SK-N-SH (cell line): ENCODE measurements at regions of chr2 and their contacts with region 1.

Region 1: GRCh38 chr2:9142551-9143263 is 63.9 kb upstream of the ASAP2 start:
- DNase-seq: peak; percentile 94
- H3K4me3 ChIP-seq: peak overlapping the region; percentile 23 to 36; a peak in 2 of 4 replicates
- H3K27ac ChIP-seq: peak overlapping the region; percentile 16 to 58; a peak in 3 of 4 replicates
- H3K4me1 ChIP-seq: peaks cover 3 to 8% of the 10 kb centered on the region in 2 experiments; a peak in 2 of 4 replicates
- H3K27me3 ChIP-seq: no peaks in the 10 kb centered on the region
- CTCF ChIP-seq: peak; percentile 99
- EP300 ChIP-seq: peak in 1 of 2 experiments; percentile 44; a peak in 1 of 4 replicates
- RAD21 ChIP-seq: peak; percentile 99

Region 2: DNA sequence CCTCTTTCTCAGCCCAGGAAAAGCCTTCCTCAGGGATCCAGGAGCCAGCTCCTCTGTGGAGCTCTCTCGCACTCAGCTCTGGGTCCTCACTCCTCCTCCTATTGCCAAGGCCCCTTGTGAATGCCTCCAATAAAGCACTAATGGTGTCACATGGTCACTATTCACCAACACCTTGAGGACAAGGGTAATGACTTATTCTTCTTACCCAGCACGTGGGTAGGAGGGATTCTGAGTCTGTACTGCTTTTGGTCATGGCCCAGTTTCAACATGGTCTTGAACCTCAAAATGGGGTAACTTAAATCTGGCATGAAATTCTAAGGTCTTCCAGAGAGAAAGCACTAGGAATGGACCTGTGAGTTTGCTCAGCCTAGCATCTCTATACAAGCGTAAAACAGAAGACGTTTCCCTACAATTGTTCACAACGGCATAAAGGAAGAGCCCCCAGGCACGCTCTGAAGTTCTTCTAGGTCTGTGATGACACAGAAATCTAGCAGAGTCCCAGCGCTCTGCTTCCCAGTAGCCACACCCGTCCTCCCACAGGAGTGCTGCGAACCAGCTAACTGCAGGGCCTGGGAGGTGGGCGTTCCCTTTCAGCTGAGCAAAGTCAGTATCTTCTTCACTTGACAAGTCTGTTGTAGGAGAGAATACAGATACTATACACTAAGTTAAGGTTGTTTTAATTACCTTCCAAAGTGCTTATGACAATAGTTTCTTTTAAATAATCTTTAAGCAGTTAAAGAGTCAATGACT is 290.7 kb before region 1 on chr2:
- CTCF ChIA-PET with region 1: interaction called, 13 read pairs
- POLR2A ChIA-PET with region 1: no interaction called
- DNase-seq: no peak
- H3K4me3 ChIP-seq: no peak overlapping the region
- H3K27ac ChIP-seq: no peak overlapping the region
- H3K4me1 ChIP-seq: no peaks in the 10 kb centered on the region; a peak in 1 of 4 replicates
- H3K27me3 ChIP-seq: no peaks in the 10 kb centered on the region
- CTCF ChIP-seq: no peak
- EP300 ChIP-seq: no peak
- RAD21 ChIP-seq: no peak

Region 3: DNA sequence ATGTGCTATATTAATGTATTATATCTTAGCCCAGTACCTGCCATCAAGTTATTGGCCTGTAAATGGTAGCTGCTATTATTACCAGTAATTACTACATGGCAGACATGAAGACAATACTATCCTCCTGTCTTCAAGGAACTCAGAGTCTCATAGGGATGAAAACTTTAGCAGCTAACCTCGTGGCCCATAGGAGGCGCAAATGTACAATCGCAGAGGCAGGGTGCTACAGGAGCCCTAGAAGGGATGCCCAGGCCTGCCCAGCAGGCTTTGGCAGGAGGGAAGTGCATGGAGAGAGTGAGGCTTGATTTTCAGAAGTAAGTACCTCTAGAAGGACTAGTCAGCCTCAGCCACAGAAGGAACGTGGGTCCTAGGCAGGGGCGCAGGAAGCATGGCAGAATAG is 260.6 kb before region 1 on chr2:
- CTCF ChIA-PET with region 1: interaction called, 25 read pairs
- POLR2A ChIA-PET with region 1: no interaction called
- DNase-seq: peak; percentile 51
- H3K4me3 ChIP-seq: no peak overlapping the region
- H3K27ac ChIP-seq: no peak overlapping the region
- H3K4me1 ChIP-seq: no peaks in the 10 kb centered on the region
- H3K27me3 ChIP-seq: no peaks in the 10 kb centered on the region
- CTCF ChIP-seq: peak; percentile 52
- EP300 ChIP-seq: no peak
- RAD21 ChIP-seq: peak; percentile 66

Region 4: DNA sequence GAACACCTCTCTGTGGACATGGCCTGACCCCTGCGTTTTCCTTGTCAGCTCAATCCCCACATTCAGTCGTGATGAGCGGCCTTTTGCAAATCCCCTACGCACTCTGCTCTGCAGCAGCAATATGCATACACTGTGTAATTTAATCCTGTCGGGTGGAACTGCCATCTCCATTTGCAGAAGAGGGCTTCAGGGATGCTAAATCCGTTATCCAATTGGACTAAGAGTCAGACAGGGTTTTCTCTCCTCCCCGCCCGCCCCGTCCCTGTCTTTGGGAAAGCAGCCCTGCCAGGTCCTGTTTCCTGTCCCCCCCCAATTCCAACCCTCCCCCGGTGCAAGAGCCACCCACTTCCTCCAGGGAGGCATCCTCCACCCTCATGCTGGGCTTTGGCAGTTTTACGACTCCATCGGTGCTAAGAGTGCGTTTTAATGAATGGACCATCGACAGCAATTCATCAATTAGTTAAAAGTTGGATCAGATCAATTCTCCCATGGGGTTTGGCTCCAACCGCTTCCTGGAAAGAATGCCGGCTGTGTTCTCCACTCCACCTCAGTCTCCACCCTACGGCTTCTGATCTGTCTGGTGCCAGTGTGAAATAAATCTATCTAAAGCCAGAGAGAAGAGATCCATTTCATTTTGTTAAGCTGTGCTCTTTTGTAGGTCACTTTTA is 10.4 kb after region 1 on chr2:
- CTCF ChIA-PET with region 1: interaction called, 24 read pairs
- POLR2A ChIA-PET with region 1: no interaction called
- DNase-seq: no peak
- H3K4me3 ChIP-seq: no peak overlapping the region
- H3K27ac ChIP-seq: no peak overlapping the region
- H3K4me1 ChIP-seq: peaks cover 0 to 4% of the 10 kb centered on the region in 2 experiments; a peak in 1 of 4 replicates
- H3K27me3 ChIP-seq: no peaks in the 10 kb centered on the region
- CTCF ChIP-seq: no peak
- EP300 ChIP-seq: no peak
- RAD21 ChIP-seq: no peak

Region 5: DNA sequence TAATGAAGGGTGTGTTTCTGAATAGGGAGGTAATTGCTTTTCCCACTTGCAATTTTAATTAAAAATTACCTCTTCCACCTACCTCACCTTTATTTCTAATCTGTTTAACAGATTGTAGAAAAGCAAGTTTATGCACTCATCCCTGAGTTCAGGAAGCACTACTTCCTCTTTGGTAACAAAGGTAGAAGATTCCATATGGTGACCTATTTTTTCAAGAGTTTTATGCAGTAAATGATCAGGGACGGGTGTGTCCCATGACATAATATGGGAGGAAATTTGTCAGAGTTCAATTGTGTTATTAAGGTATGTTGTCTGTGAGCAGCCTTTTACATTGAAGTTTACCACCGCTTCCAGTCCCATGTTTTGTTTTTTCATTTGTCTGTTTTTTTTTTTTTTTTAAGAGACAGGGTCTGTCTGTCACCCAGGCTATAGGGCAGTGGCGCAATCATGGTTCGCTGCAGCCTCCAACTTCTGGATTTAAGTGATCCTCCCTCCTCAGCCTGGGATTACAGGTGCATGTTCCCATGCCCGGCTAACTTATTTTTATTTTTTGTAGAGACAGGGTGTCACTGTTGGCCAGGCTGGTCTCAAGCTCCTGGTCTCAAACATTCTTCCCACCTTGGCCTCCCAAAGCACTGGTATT is 132.1 kb after region 1 on chr2:
- CTCF ChIA-PET with region 1: no interaction called
- POLR2A ChIA-PET with region 1: no interaction called
- DNase-seq: no peak
- H3K4me3 ChIP-seq: no peak overlapping the region
- H3K27ac ChIP-seq: peak overlapping the region in 1 of 2 experiments; percentile 1; a peak in 1 of 4 replicates
- H3K4me1 ChIP-seq: peaks cover 17 to 38% of the 10 kb centered on the region in 2 experiments; a peak in 3 of 4 replicates
- H3K27me3 ChIP-seq: no peaks in the 10 kb centered on the region
- CTCF ChIP-seq: no peak
- EP300 ChIP-seq: no peak
- RAD21 ChIP-seq: no peak

Region 6: DNA sequence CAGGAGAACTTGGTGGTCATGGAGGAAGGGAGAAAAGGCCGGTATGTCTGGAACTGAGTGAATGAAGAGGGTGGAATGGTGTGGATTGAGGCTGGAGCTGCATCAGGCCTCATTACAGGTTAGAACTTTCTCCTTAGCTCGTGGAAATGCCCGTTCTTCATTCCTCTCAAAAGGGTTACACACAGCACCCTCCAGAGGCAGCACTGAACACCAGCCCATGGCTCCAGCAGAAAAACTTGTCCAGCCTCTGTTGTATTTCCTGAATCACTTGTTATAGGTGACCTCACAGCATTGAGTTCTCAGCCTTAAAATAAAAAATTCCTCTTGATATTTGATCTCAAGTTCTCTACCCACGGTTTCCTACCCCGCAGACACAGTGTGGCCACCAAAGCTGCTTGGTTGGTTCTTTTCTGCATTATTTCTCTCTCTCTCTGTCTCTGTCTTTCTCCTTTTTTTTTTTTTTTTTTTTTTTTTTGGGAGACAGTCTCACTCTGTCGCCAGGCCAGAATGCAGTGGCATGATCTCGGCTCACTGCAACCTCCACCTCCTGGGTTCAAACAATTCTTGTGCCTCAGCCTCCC is 191.0 kb after region 1 on chr2:
- CTCF ChIA-PET with region 1: interaction called, 68 read pairs
- POLR2A ChIA-PET with region 1: no interaction called
- DNase-seq: peak; percentile 70
- H3K4me3 ChIP-seq: no peak overlapping the region
- H3K27ac ChIP-seq: peak overlapping the region; percentile 7 to 45
- H3K4me1 ChIP-seq: peaks cover 26 to 39% of the 10 kb centered on the region in 2 experiments
- H3K27me3 ChIP-seq: no peaks in the 10 kb centered on the region
- CTCF ChIP-seq: peak; percentile 91
- EP300 ChIP-seq: no peak
- RAD21 ChIP-seq: peak; percentile 90

Region 7: DNA sequence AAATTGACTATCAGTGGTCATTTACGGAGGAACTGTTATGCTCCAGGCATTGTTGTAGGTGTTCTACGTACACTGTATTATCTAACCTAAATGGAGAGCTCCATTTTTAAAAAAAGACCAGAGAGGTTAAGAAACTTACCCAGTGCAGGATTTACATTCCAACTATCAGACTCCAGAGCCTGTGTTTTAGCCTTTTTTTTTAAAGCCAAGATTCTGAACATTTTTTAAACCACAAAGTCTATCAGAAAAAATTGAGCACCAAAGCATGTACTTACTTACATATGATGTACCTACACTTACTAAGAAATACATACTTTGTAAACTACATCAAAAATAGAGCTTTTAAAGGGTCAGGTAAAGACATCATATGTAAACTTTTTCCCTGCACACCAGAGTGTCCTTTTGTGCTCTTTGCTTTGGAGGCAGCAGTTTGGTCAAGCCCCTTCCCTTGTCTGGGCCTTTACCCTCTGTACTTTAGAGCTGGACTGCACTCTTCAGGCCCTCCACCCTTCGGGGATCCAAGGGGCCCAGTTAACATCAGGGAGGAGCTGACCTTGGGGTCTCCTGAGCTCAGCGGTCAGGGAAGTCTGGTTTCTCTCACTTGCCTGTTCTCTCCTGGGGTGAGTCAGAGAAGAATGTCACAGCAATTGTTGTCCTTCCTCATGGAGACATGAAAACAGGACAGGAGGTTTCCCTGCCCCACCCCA is 222.2 kb after region 1 on chr2:
- CTCF ChIA-PET with region 1: interaction called, 43 read pairs
- POLR2A ChIA-PET with region 1: no interaction called
- DNase-seq: no peak
- H3K4me3 ChIP-seq: no peak overlapping the region
- H3K27ac ChIP-seq: 0 out of 4 replicates have a peak overlapping the region, but pooled peaks have one; percentile 4 to 5
- H3K4me1 ChIP-seq: no peaks in the 10 kb centered on the region; a peak in 1 of 4 replicates
- H3K27me3 ChIP-seq: no peaks in the 10 kb centered on the region
- CTCF ChIP-seq: no peak
- EP300 ChIP-seq: no peak
- RAD21 ChIP-seq: no peak

Region 8: GRCh38 chr2:9423100-9423921 is 280.6 kb after region 1 on chr2 and contains the starts of genes CPSF3 and ITGB1BP1:
- CTCF ChIA-PET with region 1: interaction called, 21 read pairs
- POLR2A ChIA-PET with region 1: no interaction called
- DNase-seq: peak; percentile 100
- H3K4me3 ChIP-seq: peak within 1 kb of the TSS; percentile 99 to 100
- H3K27ac ChIP-seq: peak within 1 kb of the TSS; percentile 81 to 91
- H3K4me1 ChIP-seq: peaks cover 24 to 33% of the 10 kb centered on the region in 2 experiments; a peak in 3 of 4 replicates
- H3K27me3 ChIP-seq: no peaks in the 10 kb centered on the region
- CTCF ChIP-seq: no peak
- EP300 ChIP-seq: 0 out of 4 replicates have a peak, but pooled peaks of 1 of the 2 experiments have one; percentile 39
- RAD21 ChIP-seq: no peak
- polyA plus RNA-seq, gene CPSF3: 31.4 and 34.2 TPM in 2 replicates
- polyA plus RNA-seq, gene ITGB1BP1: 56.6 and 62.3 TPM in 2 replicates